ENCODE measurements at regions of chr18 and their contacts with region 1.

Region 1: GRCh38 chr18:55322178-55322735 is 265.7 kb downstream of the TCF4 start:
- DNase-seq: peak; percentile 60
- ATAC-seq: peak; percentile 62
- H3K4me3 Mint-ChIP-seq: peak overlapping the region; percentile 90
- H3K27ac Mint-ChIP-seq: peak overlapping the region; percentile 92
- H3K4me1 Mint-ChIP-seq: peaks cover 63% of the 10 kb centered on the region
- H3K27me3 Mint-ChIP-seq: no peaks in the 10 kb centered on the region
- CTCF ChIP-seq: no peak

Region 2: DNA sequence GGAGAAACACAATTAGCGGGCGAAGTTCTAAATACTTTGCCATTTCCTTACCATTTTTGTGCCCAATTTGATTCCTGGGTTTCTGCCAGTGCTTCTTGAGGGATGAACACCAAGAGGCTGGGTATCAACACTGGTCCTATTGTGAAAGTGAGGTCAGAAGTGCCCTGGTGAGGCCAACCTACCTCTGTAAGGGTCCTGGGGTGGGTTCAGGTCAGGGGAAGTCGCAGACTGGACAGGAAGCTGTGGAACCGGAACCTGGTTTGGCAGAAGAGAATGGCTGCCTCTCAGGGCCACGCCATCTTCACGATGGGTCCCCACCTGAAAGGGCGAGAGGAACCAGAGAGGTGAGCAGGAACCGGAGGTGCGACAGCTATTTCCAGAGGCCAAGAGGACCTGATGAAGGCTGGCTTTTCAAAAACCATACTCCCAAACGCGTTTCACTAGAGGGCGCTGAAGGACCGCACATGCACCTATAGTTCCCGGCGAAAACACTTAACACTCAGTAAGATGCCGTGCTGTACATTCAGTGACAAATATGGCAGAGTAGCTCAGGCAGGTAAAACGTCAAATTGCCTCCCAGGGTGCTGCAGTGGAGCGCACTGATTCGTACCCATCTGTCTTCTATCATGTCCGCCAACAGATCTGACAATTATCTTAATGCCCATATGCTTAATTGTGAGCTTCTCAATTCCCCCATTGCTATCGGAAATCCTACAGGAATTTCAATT is 87.7 kb before region 1 on chr18:
- CTCF ChIA-PET with region 1: interaction called, 9 read pairs
- POLR2A ChIA-PET with region 1: interaction called, 17 read pairs
- intact Hi-C with region 1: no loop called
- DNase-seq: peak; percentile 57
- ATAC-seq: peak; percentile 77
- H3K4me3 Mint-ChIP-seq: no peak overlapping the region
- H3K27ac Mint-ChIP-seq: peak overlapping the region; percentile 76
- H3K4me1 Mint-ChIP-seq: peaks cover 45% of the 10 kb centered on the region
- H3K27me3 Mint-ChIP-seq: no peaks in the 10 kb centered on the region
- CTCF ChIP-seq: peak; percentile 63

Region 3: GRCh38 chr18:55300421-55300935 is 21.8 kb before region 1 on chr18:
- CTCF ChIA-PET with region 1: interaction called, 3 read pairs
- POLR2A ChIA-PET with region 1: interaction called, 15 read pairs
- intact Hi-C with region 1: loop called (anchors 1 kb)
- DNase-seq: no peak
- ATAC-seq: no peak
- H3K4me3 Mint-ChIP-seq: peak overlapping the region; percentile 28
- H3K27ac Mint-ChIP-seq: peak overlapping the region; percentile 64
- H3K4me1 Mint-ChIP-seq: peaks cover 89% of the 10 kb centered on the region
- H3K27me3 Mint-ChIP-seq: no peaks in the 10 kb centered on the region
- CTCF ChIP-seq: no peak

Region 4: DNA sequence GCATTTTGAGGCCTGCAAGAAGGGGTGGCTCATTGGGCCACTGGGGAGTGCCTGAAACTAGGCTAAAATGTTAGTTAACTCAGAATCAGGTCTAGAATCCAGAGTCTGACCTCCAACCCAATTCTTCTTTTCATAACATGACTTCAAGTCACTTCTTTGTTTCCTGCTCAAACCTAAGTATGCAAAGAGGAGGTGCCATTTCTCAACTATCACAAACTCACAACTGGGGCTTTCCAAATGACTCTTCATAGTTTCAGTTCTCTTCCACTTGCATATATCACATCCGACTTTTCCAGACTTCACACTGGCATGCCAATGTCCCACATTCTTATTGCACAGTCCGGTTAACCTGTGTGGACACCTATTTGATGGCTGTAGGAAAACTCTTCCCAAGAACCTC is 54.1 kb after region 1 on chr18:
- CTCF ChIA-PET with region 1: no interaction called
- POLR2A ChIA-PET with region 1: interaction called, 9 read pairs
- intact Hi-C with region 1: loop called (anchors 2 kb)
- DNase-seq: no peak
- ATAC-seq: peak; percentile 91
- H3K4me3 Mint-ChIP-seq: peak overlapping the region; percentile 13
- H3K27ac Mint-ChIP-seq: peak overlapping the region; percentile 87
- H3K4me1 Mint-ChIP-seq: peaks cover 41% of the 10 kb centered on the region
- H3K27me3 Mint-ChIP-seq: no peaks in the 10 kb centered on the region
- CTCF ChIP-seq: no peak

Region 5: DNA sequence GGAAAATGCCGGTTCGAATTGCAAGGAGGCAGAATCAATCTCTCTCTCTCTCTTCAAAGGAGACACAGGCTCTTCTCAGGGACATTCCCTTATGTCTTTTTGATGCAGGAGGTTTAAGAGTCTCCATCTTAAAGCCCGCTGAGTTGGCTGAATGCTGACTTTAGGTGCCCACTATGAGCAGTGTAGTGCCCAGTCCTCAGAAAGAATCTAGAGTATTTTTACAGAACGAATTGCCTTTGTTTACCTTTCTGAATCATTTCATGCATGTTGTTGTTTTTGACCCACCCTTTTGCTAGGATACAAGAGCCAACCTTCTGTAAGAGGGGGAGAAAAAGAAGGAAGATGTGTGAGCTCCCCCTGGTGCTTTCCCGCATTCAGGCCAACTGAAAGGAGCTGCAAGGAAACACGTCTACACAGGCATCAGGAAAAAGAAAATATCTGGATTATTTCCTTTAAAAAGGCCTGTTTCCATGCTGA is 459.3 kb after region 1 on chr18:
- CTCF ChIA-PET with region 1: no interaction called
- POLR2A ChIA-PET with region 1: interaction called, 8 read pairs
- intact Hi-C with region 1: loop called (anchors 1 kb)
- DNase-seq: no peak
- ATAC-seq: no peak
- H3K4me3 Mint-ChIP-seq: peak overlapping the region; percentile 87
- H3K27ac Mint-ChIP-seq: peak overlapping the region; percentile 97
- H3K4me1 Mint-ChIP-seq: peaks cover 33% of the 10 kb centered on the region
- H3K27me3 Mint-ChIP-seq: peaks cover 6% of the 10 kb centered on the region
- CTCF ChIP-seq: no peak

Region 6: DNA sequence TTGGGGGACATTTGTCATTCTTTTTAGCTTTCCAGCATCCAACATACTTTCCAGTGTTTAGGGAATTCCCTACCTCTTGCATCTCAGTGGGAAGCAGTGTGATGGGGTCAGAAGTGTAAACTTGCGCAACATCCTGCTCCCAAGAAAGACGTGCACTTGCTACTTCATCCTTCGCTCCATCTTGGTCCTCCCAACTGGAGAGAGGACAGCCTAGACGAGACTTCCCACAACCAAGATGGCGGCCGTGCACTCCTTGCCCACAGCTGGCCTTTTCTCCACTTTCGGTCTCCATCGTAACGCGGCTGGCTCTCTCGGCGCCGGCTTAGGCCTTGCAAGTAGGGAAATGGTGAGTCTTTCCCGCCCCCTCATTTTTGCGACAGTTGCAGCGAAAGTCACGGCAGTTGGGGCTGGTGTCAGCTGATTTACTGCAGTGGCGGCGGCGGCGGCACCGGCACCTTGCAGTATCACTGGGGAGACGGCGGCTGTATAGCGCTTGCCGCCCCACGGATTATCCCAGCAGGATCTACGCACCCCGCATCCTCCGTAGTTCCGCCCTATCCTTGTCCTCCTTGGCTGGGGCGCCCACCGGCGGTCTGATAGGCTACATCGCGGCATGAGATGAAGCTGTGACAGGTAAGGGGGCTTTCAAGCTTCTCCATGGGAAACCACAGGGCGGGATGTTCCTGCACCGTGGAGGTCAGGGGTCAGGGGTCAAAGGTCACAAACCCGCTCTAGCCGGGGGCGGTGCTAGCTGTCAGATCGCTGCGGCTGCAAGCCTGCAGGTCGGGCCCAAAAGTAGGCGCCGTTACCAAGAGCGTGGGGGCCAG is 1328.9 kb after region 1 on chr18 and contains the start of gene WDR7:
- CTCF ChIA-PET with region 1: no interaction called
- POLR2A ChIA-PET with region 1: interaction called, 8 read pairs
- intact Hi-C with region 1: loop called (anchors 1 kb)
- DNase-seq: peak; percentile 81
- ATAC-seq: peak; percentile 93
- H3K4me3 Mint-ChIP-seq: peak within 1 kb of the TSS; percentile 92
- H3K27ac Mint-ChIP-seq: peak within 1 kb of the TSS; percentile 92
- H3K4me1 Mint-ChIP-seq: peaks cover 36% of the 10 kb centered on the region
- H3K27me3 Mint-ChIP-seq: no peaks in the 10 kb centered on the region
- CTCF ChIP-seq: no peak
- total RNA-seq, gene WDR7: 26.0 and 33.4 TPM in 2 replicates